Activated T-helper 1 cell treated with anti-CD3 and anti-CD28 coated beads, Interleukin-12 subunit alpha, Interleukin-12 subunit beta, Interleukin-2, Interleukin-4 antibody, amounts not matched to agents 30 ng/mL and 10 ng/mL and 1 ng/mL, durations not matched to agents 14 hours and 24 hours and 36 hours (primary cell): ENCODE measurements at regions of chr7 and their contacts with region 1.

Region 1: DNA sequence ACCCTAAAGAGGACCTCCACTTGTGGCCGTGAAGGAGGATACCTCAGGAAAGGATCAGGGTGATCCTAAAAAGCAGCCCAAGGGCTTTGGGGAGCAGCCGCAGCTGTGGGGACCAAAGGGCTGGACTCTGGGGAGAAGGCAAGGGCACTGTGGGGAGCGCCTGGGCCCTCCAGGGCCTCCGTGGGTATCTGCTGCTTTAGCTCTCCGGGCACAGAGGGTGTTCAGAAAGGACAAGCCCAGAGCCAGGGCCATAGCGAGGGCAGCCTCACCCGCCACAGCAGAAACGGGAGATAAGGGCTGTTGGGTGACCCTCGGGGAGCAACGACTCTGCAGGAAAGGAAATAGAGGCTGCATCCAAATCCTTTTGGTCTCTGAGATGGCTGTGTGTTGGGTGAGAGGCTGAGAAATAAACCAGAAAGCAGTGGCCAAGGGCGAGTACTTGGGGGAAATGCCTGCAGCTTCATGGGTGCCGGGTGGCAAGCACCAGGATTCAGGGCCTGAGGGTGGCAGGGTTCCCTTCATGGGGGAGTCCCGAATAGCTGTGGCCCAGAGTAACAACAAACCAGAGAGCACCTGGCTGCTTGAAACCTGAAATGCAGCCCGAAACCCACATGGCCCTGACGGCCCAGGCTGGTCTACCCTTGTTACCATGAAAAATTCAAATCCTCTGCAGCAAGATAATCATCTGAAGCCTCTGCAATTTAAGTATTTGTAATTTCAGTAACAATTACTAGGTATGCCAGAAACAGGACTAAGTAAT is 95.2 kb downstream of the VIPR2 start:
- DNase-seq: no peak
- H3K4me3 Mint-ChIP-seq: no peak overlapping the region
- H3K27ac Mint-ChIP-seq: no peak overlapping the region
- H3K4me1 Mint-ChIP-seq: peaks cover 21% of the 10 kb centered on the region
- H3K27me3 Mint-ChIP-seq: no peaks in the 10 kb centered on the region

Region 2: DNA sequence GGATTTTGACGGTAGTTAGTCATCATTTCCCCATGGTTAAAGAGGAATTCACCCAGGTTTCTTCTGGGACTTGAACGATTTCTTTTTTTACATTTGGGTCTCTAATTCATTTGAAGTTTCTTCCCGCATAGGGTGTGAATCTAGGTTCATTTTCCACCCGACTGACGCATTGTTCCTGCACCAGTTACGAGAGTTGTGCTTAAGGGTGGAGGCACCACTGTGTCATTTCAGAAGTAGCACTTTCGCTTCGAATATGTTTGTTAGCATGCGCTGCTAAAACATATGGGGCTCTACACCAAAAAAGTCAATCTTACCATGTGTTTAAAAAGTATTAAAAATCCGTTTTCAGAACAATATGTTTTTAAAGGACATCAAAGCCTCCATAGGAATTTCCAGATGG is 45.0 kb before region 1 on chr7:
- intact Hi-C with region 1: loop called (anchors 1 kb)
- DNase-seq: peak; percentile 14
- H3K4me3 Mint-ChIP-seq: peak overlapping the region; percentile 3
- H3K27ac Mint-ChIP-seq: peak overlapping the region; percentile 84
- H3K4me1 Mint-ChIP-seq: peaks cover 21% of the 10 kb centered on the region
- H3K27me3 Mint-ChIP-seq: peaks cover 5% of the 10 kb centered on the region

Region 3: DNA sequence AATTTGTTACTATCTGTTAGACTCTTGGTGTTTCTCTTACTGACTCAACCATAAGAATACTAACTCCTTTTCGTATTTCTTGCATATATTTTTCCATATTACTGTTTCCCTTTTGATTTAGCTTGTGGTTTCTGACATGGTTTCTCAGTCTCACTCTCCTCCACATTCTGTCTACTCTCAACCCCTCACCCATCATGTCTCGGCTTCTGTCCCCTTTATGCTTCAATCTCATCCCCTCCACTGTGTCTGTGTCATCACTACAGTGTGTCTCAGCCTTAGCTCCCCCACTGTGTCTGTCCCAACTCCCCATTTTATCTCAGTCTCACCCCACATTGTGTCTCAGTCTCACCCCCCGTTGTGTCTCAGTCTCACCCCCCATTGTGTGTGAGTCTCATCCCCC is 31.7 kb before region 1 on chr7:
- intact Hi-C with region 1: loop called (anchors 1 kb)
- DNase-seq: no peak
- H3K4me3 Mint-ChIP-seq: no peak overlapping the region
- H3K27ac Mint-ChIP-seq: peak overlapping the region; percentile 41
- H3K4me1 Mint-ChIP-seq: peaks cover 14% of the 10 kb centered on the region
- H3K27me3 Mint-ChIP-seq: peaks cover 5% of the 10 kb centered on the region

Region 4: DNA sequence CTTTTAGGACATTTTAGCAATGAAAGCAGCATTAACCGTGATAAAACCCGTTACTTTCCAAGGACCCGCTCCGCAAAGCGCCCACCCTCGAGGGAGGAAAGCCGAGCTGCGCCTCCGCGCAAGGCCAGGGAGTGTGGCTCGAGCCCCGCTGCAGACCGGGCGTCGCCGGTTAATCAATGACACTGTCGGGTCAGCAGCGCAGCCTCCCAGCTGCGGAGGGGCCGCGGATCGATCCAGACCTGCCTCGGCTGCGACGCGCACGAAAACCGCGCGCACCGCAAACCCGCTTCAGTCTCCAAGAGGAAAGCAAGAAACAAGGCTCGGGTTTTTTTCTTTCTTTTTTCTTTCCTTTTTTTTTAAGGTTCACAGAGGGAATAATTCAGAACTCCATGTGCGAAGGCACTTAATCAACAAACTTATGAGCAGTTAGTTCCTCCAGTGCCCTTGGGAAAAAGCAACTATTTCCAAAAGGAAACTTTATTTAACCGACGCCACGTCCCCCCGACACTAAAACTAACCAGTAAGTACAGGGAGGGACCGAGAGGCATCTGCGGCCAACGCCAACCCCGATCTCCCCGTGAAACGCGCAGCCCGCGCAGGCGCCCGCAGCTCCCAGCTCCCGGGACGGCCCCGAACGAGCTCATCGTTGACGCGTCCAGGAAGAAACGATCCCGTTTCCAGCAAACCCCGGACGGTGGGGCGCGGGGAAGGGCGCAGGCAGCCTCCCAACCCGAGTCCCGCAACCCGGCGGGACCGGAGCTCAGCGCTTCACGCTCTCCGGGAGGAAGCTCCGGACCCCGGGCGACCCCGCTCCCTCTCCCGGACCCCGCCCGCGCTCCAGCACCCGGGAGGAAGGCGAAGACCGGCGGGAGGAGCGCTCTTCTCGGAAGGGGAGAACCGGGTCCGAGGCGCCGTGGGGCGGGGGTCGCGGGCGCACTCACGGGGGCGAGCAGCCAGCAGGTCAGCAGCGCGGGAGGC is 94.6 kb after region 1 on chr7:
- intact Hi-C with region 1: loop called (anchors 10 kb)
- DNase-seq: no peak
- H3K4me3 Mint-ChIP-seq: peak overlapping the region; percentile 61
- H3K27ac Mint-ChIP-seq: no peak overlapping the region
- H3K4me1 Mint-ChIP-seq: no peaks in the 10 kb centered on the region
- H3K27me3 Mint-ChIP-seq: peaks cover 39% of the 10 kb centered on the region